ENCODE measurements at regions of chr1 and their contacts with region 1.

Region 1: GRCh38 chr1:15526490-15527339 is at the start of gene DNAJC16:
- DNase-seq: peak; percentile 100
- H3K4me3 ChIP-seq: peak within 1 kb of the TSS; percentile 73 to 93 (median 80)
- H3K27ac ChIP-seq: peak within 1 kb of the TSS; percentile 95
- H3K4me1 ChIP-seq: peaks cover 14% of the 10 kb centered on the region
- H3K27me3 ChIP-seq: no peaks in the 10 kb centered on the region
- CTCF ChIP-seq: peak in 1 of 2 donors; percentile 41
- total RNA-seq, gene DNAJC16: 16.0 to 23.8 TPM

Region 2: DNA sequence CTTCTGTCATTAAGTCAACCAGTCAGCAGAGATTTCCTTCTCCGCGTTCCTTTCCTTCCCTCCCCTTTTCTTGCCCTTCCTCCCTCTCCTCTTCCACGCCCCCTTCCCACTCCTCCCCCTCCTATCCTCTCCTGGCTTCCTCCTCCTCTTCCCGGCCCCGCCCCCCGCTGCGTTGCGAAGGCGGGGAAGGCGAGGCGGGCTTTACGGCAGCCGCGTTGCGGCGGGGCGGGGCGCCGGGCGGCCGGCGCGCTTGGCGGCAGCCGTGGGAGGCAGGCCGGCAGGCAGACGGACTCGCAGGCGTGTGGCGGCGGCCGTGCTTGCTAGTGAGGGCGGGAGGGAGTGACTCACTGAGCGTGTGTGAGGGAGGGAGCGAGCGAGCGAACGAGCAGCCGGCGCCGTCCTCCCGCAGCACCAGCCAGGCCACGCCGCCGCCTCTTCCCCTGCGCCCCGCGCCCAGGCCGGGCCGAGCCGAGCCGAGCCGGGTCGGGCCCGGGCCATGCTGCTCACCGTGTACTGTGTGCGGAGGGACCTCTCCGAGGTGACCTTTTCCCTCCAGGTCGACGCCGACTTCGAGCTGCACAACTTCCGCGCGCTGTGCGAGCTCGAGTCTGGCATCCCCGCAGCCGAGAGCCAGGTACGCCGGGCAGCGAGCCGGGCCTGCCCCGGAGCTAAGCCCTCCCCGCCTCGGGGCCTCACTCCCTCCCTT is 90.6 kb after region 1 on chr1 and contains the start of gene DDI2:
- CTCF ChIA-PET with region 1: no interaction called
- dilution Hi-C with region 1: no loop called
- in situ Hi-C with region 1: no loop called
- intact Hi-C with region 1: loop called (anchors 2 kb)
- DNase-seq: peak; percentile 98
- H3K4me3 ChIP-seq: peak within 1 kb of the TSS; percentile 81 to 99 (median 96)
- H3K27ac ChIP-seq: peak within 1 kb of the TSS; percentile 81
- H3K4me1 ChIP-seq: peaks cover 29% of the 10 kb centered on the region
- H3K27me3 ChIP-seq: no peaks in the 10 kb centered on the region
- CTCF ChIP-seq: no peak
- total RNA-seq, gene DDI2: 22.2 to 29.7 TPM

Region 3: DNA sequence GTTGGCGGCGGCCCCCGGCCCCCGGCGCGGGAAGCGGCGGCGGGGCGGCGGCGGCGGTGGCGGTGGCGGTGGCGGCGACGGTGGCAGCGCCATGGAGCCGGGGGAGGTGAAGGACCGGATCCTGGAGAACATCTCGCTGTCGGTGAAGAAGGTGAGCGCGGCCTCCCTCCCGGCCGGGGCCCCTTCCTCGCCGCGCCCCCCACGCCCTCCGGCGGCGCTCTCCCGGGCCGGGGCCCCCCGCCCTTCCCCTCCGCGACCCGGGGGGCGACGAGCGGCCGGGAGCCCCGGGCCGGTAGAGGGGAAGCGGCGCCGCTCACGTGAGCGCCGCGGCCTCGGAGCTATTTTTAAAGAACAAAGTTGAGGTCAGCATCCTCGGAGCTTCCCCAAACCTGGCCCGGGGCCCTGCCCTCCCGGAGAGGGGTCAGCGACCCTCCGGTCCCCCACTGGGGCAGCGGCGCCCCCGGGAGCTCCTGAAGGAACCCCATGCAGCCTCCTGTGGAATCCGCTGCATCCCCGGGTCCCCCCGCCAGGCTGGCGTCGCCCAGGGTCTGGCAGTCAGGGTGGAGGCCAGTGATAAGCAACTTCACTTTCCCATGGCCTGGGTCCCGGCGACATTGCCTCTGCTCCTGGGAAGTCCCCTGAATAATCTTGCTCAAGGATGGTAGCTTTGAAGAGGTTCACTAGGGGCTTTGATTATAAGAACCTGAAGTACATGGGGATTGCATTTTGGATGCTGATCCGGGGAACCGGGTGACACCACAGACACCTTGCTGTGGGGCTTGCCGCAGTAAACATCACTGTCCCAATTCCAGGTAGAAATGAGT is 158.0 kb after region 1 on chr1:
- CTCF ChIA-PET with region 1: no interaction called
- dilution Hi-C with region 1: no loop called
- in situ Hi-C with region 1: no loop called
- intact Hi-C with region 1: loop called (anchors 2 kb)
- DNase-seq: peak; percentile 16
- H3K4me3 ChIP-seq: peak overlapping the region; percentile 75 to 92 (median 89)
- H3K27ac ChIP-seq: peak overlapping the region; percentile 43
- H3K4me1 ChIP-seq: peaks cover 37% of the 10 kb centered on the region
- H3K27me3 ChIP-seq: no peaks in the 10 kb centered on the region
- CTCF ChIP-seq: no peak

Region 4: DNA sequence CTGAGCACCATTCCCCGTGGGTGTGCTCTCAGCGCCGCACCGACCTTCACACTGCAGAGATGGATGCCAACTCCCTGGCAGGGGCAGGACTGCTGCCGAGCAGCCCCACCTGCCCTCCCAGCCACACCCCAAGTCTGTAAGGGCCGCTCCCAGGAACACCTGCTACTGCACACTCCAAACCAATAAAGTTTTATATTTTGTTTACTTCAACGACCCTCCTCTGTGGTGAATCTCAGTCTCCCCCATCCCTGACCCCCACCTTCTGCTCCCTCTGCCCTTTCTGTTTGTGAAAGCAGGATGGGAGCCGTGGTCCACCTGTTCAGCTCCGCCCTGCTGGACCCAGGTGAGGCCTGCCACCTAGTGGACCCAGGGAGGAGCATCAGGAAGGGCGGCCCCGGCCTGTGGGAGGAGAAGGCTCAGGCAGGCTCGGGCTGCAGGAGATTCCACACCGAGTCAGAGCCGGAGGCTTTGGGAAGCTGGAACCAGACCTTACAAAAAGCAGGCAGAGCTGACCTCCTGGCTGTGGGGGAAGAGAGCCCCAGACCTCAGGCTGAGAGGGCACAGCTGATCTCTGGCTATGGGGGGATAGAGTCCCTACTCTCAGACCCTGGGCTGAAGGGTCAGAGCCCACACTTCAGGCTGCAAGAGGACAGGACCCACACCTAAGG is 214.6 kb after region 1 on chr1:
- CTCF ChIA-PET with region 1: no interaction called
- dilution Hi-C with region 1: no loop called
- in situ Hi-C with region 1: no loop called
- intact Hi-C with region 1: loop called (anchors 5 kb)
- DNase-seq: peak; percentile 73
- H3K4me3 ChIP-seq: no peak overlapping the region
- H3K27ac ChIP-seq: no peak overlapping the region
- H3K4me1 ChIP-seq: peaks cover 3% of the 10 kb centered on the region
- H3K27me3 ChIP-seq: no peaks in the 10 kb centered on the region
- CTCF ChIP-seq: peak; percentile 81 to 98

Region 5: GRCh38 chr1:15760520-15761211 is 234.0 kb after region 1 on chr1:
- CTCF ChIA-PET with region 1: no interaction called
- dilution Hi-C with region 1: no loop called
- in situ Hi-C with region 1: no loop called
- intact Hi-C with region 1: loop called (anchors 5 kb)
- DNase-seq: peak; percentile 60
- H3K4me3 ChIP-seq: peak overlapping the region; percentile 28 to 50 (median 42)
- H3K27ac ChIP-seq: peak overlapping the region; percentile 32
- H3K4me1 ChIP-seq: peaks cover 47% of the 10 kb centered on the region
- H3K27me3 ChIP-seq: no peaks in the 10 kb centered on the region
- CTCF ChIP-seq: no peak